Activated naive CD8-positive, alpha-beta T cell treated with anti-CD3 and anti-CD28 coated beads, Interleukin-2, amount 10 ng/mL, durations not matched to agents 7 days and 5 days (primary cell): ENCODE measurements at regions of chr7 and their contacts with region 1.

Region 1: DNA sequence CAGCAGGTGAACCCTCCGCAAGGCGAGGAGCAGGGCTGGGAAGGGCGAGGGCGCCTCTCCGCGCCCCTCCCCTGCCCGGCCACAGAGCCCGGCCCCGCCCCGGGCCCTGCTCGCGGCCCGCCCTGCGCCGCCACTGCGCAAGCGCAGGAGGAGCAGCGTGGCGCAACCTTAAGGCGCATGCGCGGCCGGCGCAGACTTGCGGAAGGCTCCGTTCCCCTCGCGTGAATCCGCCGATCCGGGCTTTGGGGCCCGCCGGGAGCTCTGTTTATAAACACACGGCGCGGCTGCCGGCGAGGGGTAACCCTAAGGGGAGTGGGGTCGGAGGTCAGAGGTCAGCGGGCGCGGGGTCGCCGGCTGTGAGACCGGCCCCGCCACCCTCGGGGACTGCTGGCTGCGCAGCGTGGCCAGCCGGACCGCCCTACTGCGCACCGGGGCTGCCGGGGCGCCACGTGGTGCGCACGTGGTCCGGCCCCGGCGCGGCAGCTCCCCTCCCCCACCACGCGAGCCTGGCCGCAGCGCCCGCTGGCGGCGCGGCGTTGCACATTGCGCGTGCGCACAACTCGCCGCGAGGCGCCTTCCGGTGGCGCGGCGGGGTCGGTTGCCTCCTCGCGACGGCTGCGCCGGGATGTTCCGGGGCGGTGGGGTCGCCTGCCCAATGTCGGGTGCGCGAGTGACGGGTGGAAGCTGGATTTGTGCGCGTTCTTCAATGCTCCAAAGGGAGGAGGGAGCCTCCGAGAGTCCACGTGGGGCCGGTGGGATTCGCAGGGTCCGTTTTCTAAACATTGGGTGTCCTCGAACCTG is 40.2 kb upstream of the FOXK1 start:
- DNase-seq: peak; percentile 100
- ATAC-seq: peak; percentile 86
- H3K4me3 Mint-ChIP-seq: peak overlapping the region; percentile 91
- H3K27ac Mint-ChIP-seq: peak overlapping the region; percentile 95
- H3K4me1 Mint-ChIP-seq: peaks cover 14% of the 10 kb centered on the region
- H3K27me3 Mint-ChIP-seq: peaks cover 4% of the 10 kb centered on the region

Region 2: GRCh38 chr7:4681886-4682620 is 40.2 kb after region 1 on chr7 and contains the start of gene FOXK1:
- POLR2A ChIA-PET with region 1: interaction called, 139 read pairs
- DNase-seq: peak; percentile 92
- ATAC-seq: peak; percentile 79
- H3K4me3 Mint-ChIP-seq: peak within 1 kb of the TSS; percentile 91
- H3K27ac Mint-ChIP-seq: peak within 1 kb of the TSS; percentile 94
- H3K4me1 Mint-ChIP-seq: peaks cover 18% of the 10 kb centered on the region
- H3K27me3 Mint-ChIP-seq: no peaks in the 10 kb centered on the region
- total RNA-seq, gene FOXK1: 41.7 to 42.1 TPM

Region 3: GRCh38 chr7:4725014-4725849 is 83.4 kb after region 1 on chr7:
- POLR2A ChIA-PET with region 1: interaction called, 22 read pairs
- DNase-seq: peak; percentile 72
- ATAC-seq: peak; percentile 81
- H3K4me3 Mint-ChIP-seq: peak overlapping the region; percentile 91
- H3K27ac Mint-ChIP-seq: peak overlapping the region; percentile 92
- H3K4me1 Mint-ChIP-seq: peaks cover 26% of the 10 kb centered on the region
- H3K27me3 Mint-ChIP-seq: no peaks in the 10 kb centered on the region